IMR-90 (cell line): ENCODE measurements at regions of chr10 and their contacts with region 1.

Region 1: DNA sequence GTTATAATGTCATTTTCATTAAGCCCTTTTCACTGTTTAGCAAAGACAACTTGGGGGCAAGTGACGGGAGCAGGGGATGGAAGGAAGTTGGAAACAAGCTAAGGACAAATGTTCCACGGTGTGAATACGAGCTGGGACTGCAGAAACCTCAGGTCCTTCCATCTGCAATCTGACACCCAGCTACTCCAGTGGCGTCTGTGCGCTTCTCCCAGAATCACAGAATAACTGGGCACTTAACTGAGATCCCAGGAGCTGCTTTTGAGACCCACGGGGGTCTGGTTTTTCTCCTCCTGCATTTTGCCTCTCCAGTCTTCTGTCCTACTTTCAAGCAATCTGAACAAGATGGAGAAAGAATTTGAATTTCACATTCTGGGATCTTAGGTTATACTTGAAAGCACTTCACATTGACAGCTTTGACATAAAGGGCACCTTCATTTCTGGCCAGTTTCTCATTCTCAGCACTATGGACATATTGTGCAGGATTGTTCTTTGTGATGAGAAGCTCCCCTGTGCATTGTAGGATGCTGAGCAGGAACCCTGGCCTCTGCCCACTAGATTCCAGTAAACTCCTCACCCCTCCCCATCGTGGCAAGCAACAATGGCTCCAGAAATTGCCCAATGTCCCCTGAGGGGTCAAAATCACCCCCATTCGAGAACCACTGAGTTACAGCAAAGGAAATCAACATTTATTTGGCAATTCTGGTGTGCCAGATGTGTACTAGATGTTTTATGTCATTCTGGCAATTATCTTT is 194.1 kb downstream of the CACNB2 start:
- DNase-seq: peak; percentile 18
- ATAC-seq: peak; percentile 62
- H3K4me3 ChIP-seq: peak overlapping the region; percentile 19; the same call in 1 of the 2 replicates
- H3K27ac ChIP-seq: no peak overlapping the region
- H3K4me1 ChIP-seq: peaks cover 6% of the 10 kb centered on the region
- H3K27me3 ChIP-seq: no peaks in the 10 kb centered on the region
- CTCF ChIP-seq: no peak
- POLR2A ChIP-seq: no peak
- RAD21 ChIP-seq: no peak

Region 2: DNA sequence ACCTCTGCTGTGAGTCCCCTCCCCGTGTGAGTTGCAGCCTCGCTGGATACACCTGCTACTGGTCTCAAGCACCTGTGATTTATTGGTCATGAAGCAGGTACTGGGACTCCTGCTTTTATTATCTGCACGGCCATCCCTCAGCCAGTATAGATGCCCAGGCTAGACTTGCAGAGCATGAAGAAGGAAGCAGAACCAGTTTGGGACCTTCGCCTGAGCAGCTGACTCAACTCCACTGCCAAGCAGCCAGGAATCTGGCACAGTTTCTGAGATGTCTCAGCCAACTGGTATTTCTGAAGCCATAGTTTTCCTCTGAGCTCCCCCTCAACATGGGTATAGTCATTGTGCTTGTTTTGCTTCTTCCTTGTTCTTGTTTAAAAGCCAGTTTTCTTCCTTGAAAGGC is 410.6 kb before region 1 on chr10:
- CTCF ChIA-PET with region 1: no interaction called
- POLR2A ChIA-PET with region 1: interaction called, 18 read pairs
- dilution Hi-C with region 1: no loop called
- in situ Hi-C with region 1: no loop called
- intact Hi-C with region 1: no loop called
- DNase-seq: peak; percentile 95
- ATAC-seq: peak; percentile 98
- H3K4me3 ChIP-seq: no peak overlapping the region
- H3K27ac ChIP-seq: peak overlapping the region; percentile 78
- H3K4me1 ChIP-seq: peaks cover 4% of the 10 kb centered on the region
- H3K27me3 ChIP-seq: no peaks in the 10 kb centered on the region
- CTCF ChIP-seq: no peak
- POLR2A ChIP-seq: no peak
- RAD21 ChIP-seq: no peak

Region 3: DNA sequence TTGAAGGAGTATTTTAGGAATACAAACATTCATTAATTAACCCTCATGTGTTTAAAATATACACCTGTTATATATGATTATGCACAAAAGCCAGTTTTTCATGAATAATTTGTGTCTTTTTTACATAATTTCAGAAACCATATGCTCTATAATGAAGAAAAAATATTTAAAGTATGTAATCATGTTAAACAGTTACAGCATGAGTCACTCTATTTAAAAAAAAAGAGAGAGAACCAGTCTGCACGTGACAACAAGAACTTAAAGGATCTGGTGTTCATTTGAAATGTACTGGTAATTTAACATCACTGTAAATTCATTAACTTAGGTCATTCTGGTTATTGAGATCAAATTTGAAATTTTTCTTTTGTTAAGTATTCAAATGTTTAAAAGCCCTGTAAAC is 34.4 kb after region 1 on chr10:
- CTCF ChIA-PET with region 1: no interaction called
- POLR2A ChIA-PET with region 1: no interaction called
- dilution Hi-C with region 1: no loop called
- in situ Hi-C with region 1: no loop called
- intact Hi-C with region 1: loop called (anchors 5 kb)
- DNase-seq: peak; percentile 77
- ATAC-seq: peak; percentile 68
- H3K4me3 ChIP-seq: no peak overlapping the region
- H3K27ac ChIP-seq: no peak overlapping the region; the same call in 1 of the 2 replicates
- H3K4me1 ChIP-seq: peaks cover 9% of the 10 kb centered on the region
- H3K27me3 ChIP-seq: no peaks in the 10 kb centered on the region
- CTCF ChIP-seq: no peak
- POLR2A ChIP-seq: no peak
- RAD21 ChIP-seq: no peak

Region 4: DNA sequence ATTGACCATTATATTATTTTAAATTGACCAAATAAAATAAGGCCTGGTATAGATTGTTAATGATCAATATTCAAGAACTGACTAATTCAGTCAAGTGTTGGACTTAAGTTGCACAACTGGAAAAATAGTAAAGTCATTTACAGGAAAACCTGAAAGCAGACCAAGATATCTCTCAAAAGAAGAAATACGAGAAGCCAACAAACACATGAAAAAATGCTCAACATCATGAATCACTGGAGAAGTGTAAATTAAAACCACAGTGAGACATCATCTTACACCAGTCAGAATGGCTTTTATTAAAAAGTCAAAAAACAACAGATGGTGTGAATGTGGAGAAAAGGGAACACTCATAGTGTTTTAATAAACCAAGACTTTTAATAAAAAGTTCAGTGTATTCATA is 633.9 kb after region 1 on chr10:
- CTCF ChIA-PET with region 1: no interaction called
- POLR2A ChIA-PET with region 1: no interaction called
- dilution Hi-C with region 1: no loop called
- in situ Hi-C with region 1: no loop called
- intact Hi-C with region 1: no loop called
- DNase-seq: no peak
- ATAC-seq: no peak
- H3K4me3 ChIP-seq: no peak overlapping the region
- H3K27ac ChIP-seq: no peak overlapping the region
- H3K4me1 ChIP-seq: no peaks in the 10 kb centered on the region
- H3K27me3 ChIP-seq: no peaks in the 10 kb centered on the region
- CTCF ChIP-seq: no peak
- POLR2A ChIP-seq: no peak
- RAD21 ChIP-seq: no peak